ENCODE measurements at regions of chr4 and their contacts with region 1.

Region 1: DNA sequence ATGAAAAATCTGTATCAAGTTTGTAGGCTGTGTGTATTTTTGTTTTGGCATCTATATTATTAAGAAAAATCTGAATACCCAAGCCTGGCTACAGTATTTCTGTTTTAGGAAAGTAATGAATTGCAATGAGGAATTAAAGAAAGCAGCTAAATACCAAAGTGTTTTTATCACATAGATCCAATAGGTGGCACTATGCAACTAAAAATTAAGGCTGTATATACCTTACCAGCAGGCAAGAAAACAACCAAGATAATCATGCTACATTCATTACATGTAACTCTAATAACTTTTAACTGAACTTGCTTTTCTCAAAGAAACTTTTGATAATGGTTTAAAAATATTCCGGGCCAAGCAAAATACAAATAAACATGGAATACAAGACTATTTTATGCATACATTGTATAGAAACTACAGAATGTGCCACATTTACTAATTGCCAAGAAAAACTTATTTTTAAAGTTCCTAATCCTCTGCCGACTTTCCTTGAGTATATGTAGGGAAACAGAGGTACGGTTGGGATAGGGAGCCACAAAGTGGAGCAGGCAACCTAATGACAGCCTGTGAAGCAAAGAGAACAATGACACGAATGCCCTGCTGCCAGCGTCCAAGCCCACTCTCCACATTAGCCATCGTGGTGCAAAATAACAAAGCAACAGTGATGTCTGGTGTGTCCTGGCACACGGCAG is 63.7 kb downstream of the SEC24D start:
- DNase-seq: peak; percentile 58
- ATAC-seq: peak; percentile 71
- H3K4me3 ChIP-seq: no peak overlapping the region
- H3K27ac ChIP-seq: no peak overlapping the region
- H3K4me1 ChIP-seq: 0 out of 2 replicates have a peak, but pooled peaks cover 8% of the 10 kb centered on the region
- H3K27me3 ChIP-seq: no peaks in the 10 kb centered on the region
- CTCF ChIP-seq: peak; percentile 69

Region 2: GRCh38 chr4:118888666-118889311 is 116.6 kb after region 1 on chr4 and contains the start of gene SYNPO2:
- CTCF ChIA-PET with region 1: interaction called, 3 read pairs
- POLR2A ChIA-PET with region 1: no interaction called
- intact Hi-C with region 1: loop called (anchors 1 kb)
- DNase-seq: peak; percentile 59
- ATAC-seq: peak; percentile 97
- H3K4me3 ChIP-seq: peak within 1 kb of the TSS; percentile 68
- H3K27ac ChIP-seq: no peak within 1 kb of the TSS
- H3K4me1 ChIP-seq: 0 out of 2 replicates have a peak, but pooled peaks cover 5% of the 10 kb centered on the region
- H3K27me3 ChIP-seq: no peaks in the 10 kb centered on the region
- CTCF ChIP-seq: no peak
- total RNA-seq, gene SYNPO2: 0.04 and 0.06 TPM in 2 replicates

Region 3: GRCh38 chr4:118954246-118954645 is 182.0 kb after region 1 on chr4:
- CTCF ChIA-PET with region 1: no interaction called
- POLR2A ChIA-PET with region 1: no interaction called
- intact Hi-C with region 1: loop called (anchors 5 kb)
- DNase-seq: peak; percentile 47
- ATAC-seq: peak; percentile 68
- H3K4me3 ChIP-seq: no peak overlapping the region
- H3K27ac ChIP-seq: no peak overlapping the region
- H3K4me1 ChIP-seq: peaks cover 7% of the 10 kb centered on the region; the same call in 1 of the 2 replicates
- H3K27me3 ChIP-seq: no peaks in the 10 kb centered on the region
- CTCF ChIP-seq: peak; percentile 54

Region 4: DNA sequence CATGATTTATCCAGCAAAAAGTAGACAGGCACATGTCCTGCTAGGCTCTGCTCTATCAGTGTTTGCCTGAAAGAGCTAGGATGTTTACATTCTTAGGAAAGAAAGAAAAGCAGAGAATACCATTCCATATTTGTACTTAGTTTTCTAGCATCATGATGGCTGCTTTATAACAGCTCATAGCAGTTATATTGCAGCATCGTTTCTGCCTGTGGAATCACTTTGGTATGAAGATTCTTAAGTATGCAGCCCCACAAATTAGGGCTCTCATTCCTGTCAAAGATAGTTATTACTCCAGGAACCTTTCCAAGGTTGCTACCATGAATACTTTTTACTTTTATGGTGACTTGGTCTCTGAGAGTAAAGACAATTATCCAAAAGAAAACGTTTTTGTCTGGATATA is 244.4 kb after region 1 on chr4:
- CTCF ChIA-PET with region 1: no interaction called
- POLR2A ChIA-PET with region 1: no interaction called
- intact Hi-C with region 1: no loop called
- DNase-seq: no peak
- ATAC-seq: no peak
- H3K4me3 ChIP-seq: no peak overlapping the region
- H3K27ac ChIP-seq: no peak overlapping the region
- H3K4me1 ChIP-seq: no peaks in the 10 kb centered on the region
- H3K27me3 ChIP-seq: no peaks in the 10 kb centered on the region
- CTCF ChIP-seq: no peak

Measured in PC-3 (cell line).